Psoas muscle (tissue), 8 donors: ENCODE measurements at regions of chr11 and their contacts with region 1.

Region 1: GRCh38 chr11:34302046-34302921 is 55.5 kb downstream of the ABTB2 start:
- DNase-seq: no peak
- ATAC-seq: peak; percentile 75 to 93 (median 86)
- H3K4me3 ChIP-seq: no peak overlapping the region
- H3K27ac ChIP-seq: peak overlapping the region; percentile 80
- H3K4me1 ChIP-seq: peaks cover 47% of the 10 kb centered on the region
- H3K27me3 ChIP-seq: no peaks in the 10 kb centered on the region
- CTCF ChIP-seq: no peak

Region 2: DNA sequence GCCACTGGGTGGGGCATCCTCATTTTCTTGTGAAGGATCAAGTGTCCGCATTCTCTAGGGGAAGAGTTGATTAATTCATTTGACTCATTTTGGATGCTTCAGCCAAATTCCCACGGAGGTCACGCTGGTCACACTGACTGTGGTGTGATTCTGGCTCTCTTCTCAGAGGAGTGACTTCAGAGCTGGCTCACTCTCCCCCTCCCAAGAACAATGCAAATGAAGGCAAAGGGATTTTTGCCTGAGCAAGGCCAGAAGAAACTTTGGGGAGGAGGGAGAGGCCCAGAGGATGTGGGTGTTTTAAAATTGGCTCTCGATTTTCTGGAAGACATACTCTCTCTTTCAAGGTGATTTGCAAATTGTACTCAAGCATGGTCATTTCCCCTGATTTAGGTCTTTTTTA is 359.3 kb before region 1 on chr11:
- intact Hi-C with region 1: no loop called
- DNase-seq: peak; percentile 57 to 60
- ATAC-seq: peak in 2 of 4 donors; percentile 45 to 49
- H3K4me3 ChIP-seq: no peak overlapping the region
- H3K27ac ChIP-seq: no peak overlapping the region
- H3K4me1 ChIP-seq: no peaks in the 10 kb centered on the region
- H3K27me3 ChIP-seq: no peaks in the 10 kb centered on the region
- CTCF ChIP-seq: no peak

Region 3: DNA sequence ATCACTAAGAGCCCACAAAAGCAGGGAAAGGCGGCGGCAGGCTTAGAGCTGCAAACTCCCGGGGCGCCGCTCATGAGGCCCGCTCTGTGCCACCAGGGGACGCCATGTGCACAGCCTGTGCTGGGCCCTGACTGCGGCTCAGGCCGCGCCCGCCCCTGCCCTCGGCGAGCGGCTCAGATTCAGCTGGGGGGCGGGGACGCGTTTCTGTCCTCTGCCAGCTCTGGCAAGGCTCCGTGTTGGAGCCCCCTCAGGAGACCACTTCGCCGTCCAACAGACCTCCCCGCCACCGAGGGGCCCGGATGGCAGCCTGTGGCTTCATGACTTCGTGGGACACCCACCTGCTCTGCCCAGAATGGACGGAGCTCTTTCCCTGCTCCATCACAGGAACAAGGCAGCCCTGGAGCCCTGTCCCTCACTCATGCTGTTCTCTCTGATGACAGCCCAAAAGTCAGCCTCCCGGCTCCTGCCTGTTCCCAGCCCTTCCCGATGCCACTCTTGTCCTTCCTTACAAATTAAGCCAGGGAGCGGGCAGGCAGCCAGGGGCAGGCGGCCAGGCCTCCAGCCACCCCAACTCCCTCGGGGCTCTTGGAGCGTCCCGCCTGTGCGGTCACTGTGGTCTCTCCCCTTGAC is 127.8 kb before region 1 on chr11:
- intact Hi-C with region 1: loop called in 1 of 2 experiments (anchors 5 kb)
- DNase-seq: peak; percentile 85 to 92
- ATAC-seq: peak; percentile 98 to 99 (median 98)
- H3K4me3 ChIP-seq: peak overlapping the region; percentile 58
- H3K27ac ChIP-seq: peak overlapping the region; percentile 19
- H3K4me1 ChIP-seq: peaks cover 7% of the 10 kb centered on the region
- H3K27me3 ChIP-seq: no peaks in the 10 kb centered on the region
- CTCF ChIP-seq: peak; percentile 96

Region 4: DNA sequence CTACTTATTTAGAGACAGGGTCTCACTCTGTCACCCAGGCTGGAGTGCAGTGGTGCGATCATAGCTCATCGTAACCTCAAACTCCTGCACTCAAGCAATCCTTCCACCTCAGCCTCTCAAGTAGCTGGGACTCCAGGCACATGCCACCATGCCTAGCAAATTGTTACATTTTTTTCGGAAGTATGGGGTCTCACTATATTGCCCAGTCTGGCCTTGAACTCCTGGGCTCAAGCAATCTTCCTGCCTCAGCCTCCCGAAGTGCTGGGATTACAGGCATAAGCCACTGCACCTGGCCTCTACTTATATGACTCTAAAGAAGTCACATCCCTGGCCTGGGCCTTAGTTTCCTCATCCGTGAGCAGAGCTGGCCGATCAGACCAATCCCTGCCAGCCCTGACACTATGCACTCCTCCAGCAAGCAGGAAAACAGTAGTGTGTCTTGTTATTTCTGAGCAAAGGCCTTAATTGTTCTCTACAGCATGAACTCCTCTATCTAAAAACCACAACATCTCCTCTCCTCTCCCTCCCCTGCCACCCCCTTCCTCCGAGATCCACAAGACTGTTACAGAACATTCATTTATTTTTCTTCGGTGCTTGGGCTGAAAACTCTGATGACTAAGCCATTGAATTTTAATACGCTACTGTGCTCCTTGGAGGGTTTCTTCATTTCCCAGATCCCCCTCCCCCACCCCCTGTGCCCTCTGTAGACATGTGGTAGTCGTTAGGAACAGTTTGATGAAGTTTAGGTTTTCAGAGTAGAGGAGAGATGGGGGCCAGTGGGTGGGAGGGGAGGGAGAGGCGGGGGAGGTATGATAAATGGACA is 36.0 kb before region 1 on chr11:
- intact Hi-C with region 1: loop called in 1 of 2 experiments (anchors 5 kb)
- DNase-seq: peak in 1 of 2 donors; percentile 38
- ATAC-seq: peak in 1 of 4 donors; percentile 16
- H3K4me3 ChIP-seq: no peak overlapping the region
- H3K27ac ChIP-seq: no peak overlapping the region
- H3K4me1 ChIP-seq: peaks cover 36% of the 10 kb centered on the region
- H3K27me3 ChIP-seq: no peaks in the 10 kb centered on the region
- CTCF ChIP-seq: no peak